ENCODE measurements at regions of chr12 and their contacts with region 1.

Region 1: DNA sequence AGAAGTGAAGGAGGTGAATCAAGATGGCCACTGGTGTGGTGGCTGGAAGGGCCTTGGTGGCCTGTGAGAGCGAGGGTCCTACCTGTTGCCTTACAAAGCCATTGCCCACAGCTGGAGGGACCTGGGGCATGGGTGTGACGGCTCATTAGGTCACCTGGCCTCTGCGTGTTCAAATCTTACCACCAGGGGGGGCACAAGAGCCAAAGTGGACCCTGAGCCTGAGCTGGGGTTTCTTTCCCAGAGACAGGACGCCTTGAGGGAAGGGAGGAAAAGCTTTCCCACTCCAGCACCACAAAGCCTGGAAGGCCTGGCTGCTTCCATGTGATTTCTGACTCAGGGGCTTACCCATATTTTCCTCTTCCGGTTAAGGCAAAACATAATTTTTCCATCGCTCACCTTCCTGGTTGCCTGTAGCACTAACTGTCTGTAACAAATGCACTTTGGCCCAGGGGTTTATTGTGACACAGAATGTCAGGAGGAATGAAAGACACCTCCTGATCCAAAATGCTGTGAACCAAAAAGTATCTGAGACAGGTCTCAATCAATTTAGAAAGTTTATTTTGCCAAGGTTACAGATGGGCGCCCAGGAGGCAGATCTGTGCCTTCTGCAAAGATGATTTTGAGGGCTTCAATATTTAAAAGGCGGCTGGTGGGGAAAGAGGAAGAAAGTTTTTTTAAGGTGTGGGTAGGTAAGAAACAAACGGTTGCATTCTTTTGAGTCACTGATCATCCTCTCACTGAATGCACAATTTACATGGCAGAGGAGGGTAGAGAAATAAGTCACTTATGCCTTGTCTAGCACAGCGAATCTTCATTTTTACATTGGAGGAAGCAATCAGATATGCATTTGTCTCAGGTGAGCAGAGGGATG is 4.3 kb upstream of the CD9 start:
- DNase-seq: peak; percentile 81
- ATAC-seq: peak; percentile 83

Region 2: DNA sequence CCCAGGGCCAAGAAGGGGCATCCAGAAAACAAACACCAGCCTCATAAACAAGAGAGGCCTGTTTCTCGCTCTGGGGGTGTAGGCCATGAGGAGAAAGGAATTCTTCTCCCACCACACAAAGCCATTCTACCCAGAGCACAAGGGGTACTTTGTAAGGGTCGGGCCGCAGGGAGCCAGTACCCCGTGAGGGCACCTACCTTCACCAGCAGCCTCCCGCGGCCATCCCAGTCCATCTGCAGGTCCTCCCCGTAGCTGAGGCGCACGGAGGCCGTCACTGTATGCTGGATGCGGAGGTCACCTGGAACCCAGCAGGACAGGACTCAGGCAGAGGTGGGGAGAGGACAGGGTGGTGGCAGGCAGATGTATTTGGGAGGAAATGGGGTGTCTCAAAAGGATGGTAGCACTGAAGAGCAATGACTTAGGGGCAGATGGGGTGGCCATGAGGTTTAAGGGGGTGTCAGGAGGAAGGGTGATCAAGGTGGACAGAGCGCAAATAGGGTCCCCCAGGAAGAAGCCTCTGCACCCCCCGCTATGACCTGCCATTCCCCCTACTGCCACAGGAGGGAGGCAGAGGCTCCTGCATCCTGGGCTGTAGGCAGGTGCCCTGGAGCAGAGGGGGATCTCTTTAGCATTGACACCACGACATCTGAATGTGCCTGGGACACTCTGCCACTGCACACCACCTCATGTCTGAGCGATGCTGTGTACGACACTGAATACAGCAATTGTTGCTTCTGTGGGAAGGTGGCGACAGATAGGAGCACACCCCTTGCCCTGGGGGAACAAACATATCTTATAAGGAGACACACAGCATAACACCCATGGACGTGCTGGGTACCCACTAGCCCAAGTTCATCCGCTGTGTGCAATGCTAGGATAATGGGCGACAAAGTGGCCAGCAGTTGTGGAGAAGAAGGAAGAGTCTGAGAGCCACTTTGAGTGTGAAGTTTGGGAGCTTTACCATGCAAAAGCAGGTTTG is 132.9 kb before region 1 on chr12:
- intact Hi-C with region 1: loop called (anchors 5 kb)
- DNase-seq: no peak
- ATAC-seq: peak; percentile 47

Region 3: GRCh38 chr12:6229224-6230218 is 33.6 kb after region 1 on chr12:
- intact Hi-C with region 1: loop called (anchors 2 kb)
- DNase-seq: no peak
- ATAC-seq: no peak

Region 4: DNA sequence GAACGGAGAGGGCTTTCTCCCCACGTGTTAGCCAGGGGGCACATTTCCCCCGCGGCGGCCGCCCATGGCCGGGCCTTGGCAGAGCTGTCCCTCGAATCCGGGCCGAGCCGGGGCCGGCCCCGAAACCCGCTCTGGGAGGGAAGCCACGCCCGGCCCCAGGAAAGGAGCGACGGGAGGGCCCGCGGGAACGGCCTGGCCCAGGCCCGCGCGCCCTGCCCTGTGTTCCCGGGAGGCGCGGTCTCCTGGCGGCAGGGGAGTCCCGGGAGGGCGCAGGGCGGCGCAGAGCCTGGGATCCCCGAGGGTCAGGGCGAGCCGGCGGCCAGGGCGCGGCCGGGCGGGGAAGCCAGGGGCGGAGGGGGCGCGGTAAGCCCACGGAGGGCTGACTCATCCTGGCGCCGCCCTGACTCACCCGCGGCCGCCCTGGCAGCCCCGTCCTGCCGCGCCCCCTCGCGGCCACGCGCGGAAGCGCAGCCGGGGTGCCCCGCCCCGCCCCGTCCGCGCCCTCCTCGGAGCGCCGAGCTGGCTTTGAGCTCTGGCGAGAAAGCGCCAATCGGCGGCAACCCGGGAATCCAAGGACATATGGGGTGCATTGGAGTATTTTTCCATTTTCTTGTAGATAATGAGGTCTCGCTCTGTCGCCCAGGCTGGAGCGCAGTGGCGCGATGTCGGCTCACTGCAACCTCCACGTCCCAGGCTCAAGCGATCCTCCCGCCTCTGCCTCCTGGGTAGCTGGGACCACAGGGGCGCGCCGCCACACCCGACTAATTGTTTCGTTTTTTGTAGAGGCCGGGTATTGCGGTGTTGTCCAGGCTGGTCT is 82.7 kb after region 1 on chr12:
- intact Hi-C with region 1: loop called (anchors 1 kb)
- DNase-seq: peak; percentile 92
- ATAC-seq: peak; percentile 95

Region 5: DNA sequence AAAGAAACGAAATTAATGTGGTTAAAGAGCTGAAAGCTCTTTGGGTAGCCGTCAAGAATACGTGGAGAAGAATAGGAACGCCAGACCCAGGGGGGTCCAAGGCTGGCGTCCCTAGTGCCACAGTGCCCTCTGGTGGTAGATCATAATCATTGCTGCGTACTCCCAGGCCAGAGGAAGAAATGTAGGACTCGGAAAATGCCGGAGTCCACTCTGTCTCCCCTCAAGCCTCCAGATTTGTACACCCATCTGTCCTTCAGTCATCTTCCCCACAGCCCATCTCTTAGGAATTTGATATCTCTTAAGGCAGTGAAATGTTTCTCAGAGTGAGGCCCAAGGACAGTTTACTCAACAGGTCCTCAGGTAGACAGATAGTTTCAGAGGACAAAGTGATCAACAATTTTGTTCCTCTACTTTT is 89.2 kb after region 1 on chr12:
- intact Hi-C with region 1: loop called (anchors 1 kb)
- DNase-seq: peak; percentile 84
- ATAC-seq: peak; percentile 86

Measured in Right ventricle myocardium inferior (tissue), 1 donor.